ENCODE measurements at regions of chr11 and their contacts with region 1.

Region 1: GRCh38 chr11:57426929-57427726 is at the start of gene SLC43A3:
- DNase-seq: peak; percentile 72
- ATAC-seq: peak; percentile 69
- H3K4me3 Mint-ChIP-seq: peak within 1 kb of the TSS; percentile 92
- H3K27ac Mint-ChIP-seq: peak within 1 kb of the TSS; percentile 91
- H3K4me1 Mint-ChIP-seq: peaks cover 47% of the 10 kb centered on the region
- H3K27me3 Mint-ChIP-seq: no peaks in the 10 kb centered on the region
- CTCF ChIP-seq: no peak
- total RNA-seq, gene SLC43A3: 213 and 237 TPM in 2 replicates

Region 2: DNA sequence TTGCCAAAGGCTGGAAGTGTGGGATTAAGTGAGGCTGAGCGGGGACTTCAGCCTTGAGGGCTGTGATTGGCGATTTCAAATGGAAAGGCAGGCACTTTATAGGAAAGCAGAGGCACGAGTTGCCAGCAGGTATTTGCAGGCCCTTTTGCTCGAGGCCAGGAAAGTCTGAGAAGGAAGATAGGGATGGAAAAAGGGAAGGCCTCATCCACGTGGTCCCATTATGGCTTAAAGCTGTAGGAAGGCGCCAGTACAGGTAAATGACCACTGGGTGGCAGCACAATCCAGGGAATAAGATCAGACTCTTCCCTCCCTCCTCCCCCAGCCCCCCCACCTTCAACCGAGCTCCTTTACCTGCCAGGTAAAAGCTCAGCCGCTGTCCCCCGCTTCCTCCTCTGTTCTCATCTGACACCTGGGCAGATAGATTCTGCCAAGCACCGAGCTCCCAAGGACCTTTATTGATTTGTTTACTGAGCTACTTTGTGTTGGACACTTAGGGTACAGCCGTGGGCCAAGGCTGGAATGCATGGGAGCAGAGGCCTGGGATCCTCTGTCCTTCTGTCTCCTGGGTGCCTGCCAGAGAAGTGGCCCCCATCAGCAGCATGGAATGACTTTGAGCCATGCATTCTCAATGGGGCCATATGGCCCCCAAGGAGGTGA is 81.4 kb before region 1 on chr11:
- CTCF ChIA-PET with region 1: interaction called, 3 read pairs
- POLR2A ChIA-PET with region 1: interaction called, 3 read pairs
- intact Hi-C with region 1: loop called (anchors 5 kb)
- DNase-seq: peak; percentile 40
- ATAC-seq: peak; percentile 91
- H3K4me3 Mint-ChIP-seq: no peak overlapping the region
- H3K27ac Mint-ChIP-seq: no peak overlapping the region
- H3K4me1 Mint-ChIP-seq: peaks cover 3% of the 10 kb centered on the region
- H3K27me3 Mint-ChIP-seq: peaks cover 3% of the 10 kb centered on the region
- CTCF ChIP-seq: no peak

Region 3: GRCh38 chr11:57456960-57457642 is 30.0 kb after region 1 on chr11:
- CTCF ChIA-PET with region 1: interaction called, 8 read pairs
- POLR2A ChIA-PET with region 1: interaction called, 4 read pairs
- intact Hi-C with region 1: loop called (anchors 1 kb)
- DNase-seq: peak; percentile 76
- ATAC-seq: peak; percentile 76
- H3K4me3 Mint-ChIP-seq: peak overlapping the region; percentile 70
- H3K27ac Mint-ChIP-seq: no peak overlapping the region
- H3K4me1 Mint-ChIP-seq: peaks cover 28% of the 10 kb centered on the region
- H3K27me3 Mint-ChIP-seq: peaks cover 28% of the 10 kb centered on the region
- CTCF ChIP-seq: peak; percentile 93

Region 4: GRCh38 chr11:57657194-57658022 is 230.3 kb after region 1 on chr11 and contains the start of gene CLP1:
- CTCF ChIA-PET with region 1: no interaction called
- POLR2A ChIA-PET with region 1: no interaction called
- intact Hi-C with region 1: loop called (anchors 2 kb)
- DNase-seq: peak; percentile 96
- ATAC-seq: peak; percentile 97
- H3K4me3 Mint-ChIP-seq: peak within 1 kb of the TSS; percentile 99
- H3K27ac Mint-ChIP-seq: peak within 1 kb of the TSS; percentile 94
- H3K4me1 Mint-ChIP-seq: peaks cover 23% of the 10 kb centered on the region
- H3K27me3 Mint-ChIP-seq: no peaks in the 10 kb centered on the region
- CTCF ChIP-seq: no peak
- total RNA-seq, gene CLP1: 20.4 and 20.9 TPM in 2 replicates

Region 5: GRCh38 chr11:57792060-57792541 is 365.0 kb after region 1 on chr11:
- CTCF ChIA-PET with region 1: no interaction called
- POLR2A ChIA-PET with region 1: no interaction called
- intact Hi-C with region 1: loop called (anchors 5 kb)
- DNase-seq: peak; percentile 71
- ATAC-seq: peak; percentile 89
- H3K4me3 Mint-ChIP-seq: peak overlapping the region; percentile 75
- H3K27ac Mint-ChIP-seq: peak overlapping the region; percentile 90
- H3K4me1 Mint-ChIP-seq: peaks cover 73% of the 10 kb centered on the region
- H3K27me3 Mint-ChIP-seq: no peaks in the 10 kb centered on the region
- CTCF ChIP-seq: no peak